CD8-positive, alpha-beta T cell (primary cell): ENCODE measurements at regions of chr19 and their contacts with region 1.

Region 1: DNA sequence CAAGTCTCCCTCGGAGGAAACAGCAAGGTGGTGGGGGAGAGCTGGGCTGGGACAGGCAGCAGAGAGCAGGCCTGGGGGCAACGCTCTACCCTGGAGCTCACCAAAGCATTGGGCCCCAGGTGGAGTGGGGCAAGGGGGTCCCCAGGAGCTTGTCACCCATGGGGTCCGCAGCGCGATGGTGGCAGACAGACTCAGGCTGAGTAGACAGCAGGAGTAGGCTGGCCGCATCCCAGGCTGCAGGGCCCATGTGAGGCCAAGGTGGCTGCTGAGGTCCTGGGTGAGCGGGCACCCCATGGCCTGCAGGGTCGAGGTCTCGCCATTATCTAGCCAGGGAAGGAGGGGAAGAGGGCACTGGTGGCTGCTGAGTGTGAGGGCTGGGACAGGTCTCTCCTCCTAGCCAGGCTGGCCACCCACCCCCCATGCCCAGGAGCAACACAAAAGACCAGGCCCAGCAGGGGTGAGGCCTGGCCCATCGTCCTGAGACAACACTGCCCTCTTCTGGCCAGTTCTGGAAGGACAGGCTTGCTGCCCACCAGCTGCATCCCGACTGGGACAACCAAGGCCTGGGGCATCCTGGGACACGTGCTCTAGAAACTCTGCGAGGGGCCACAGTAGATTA is 33.1 kb downstream of the CEBPG start:
- DNase-seq: peak; percentile 54 to 86 (median 74)
- ATAC-seq: peak; percentile 80
- H3K4me3 ChIP-seq: no peak overlapping the region
- H3K4me3 Mint-ChIP-seq: no peak overlapping the region
- H3K27ac ChIP-seq: no peak overlapping the region
- H3K27ac Mint-ChIP-seq: no peak overlapping the region
- H3K4me1 ChIP-seq: no peaks in the 10 kb centered on the region
- H3K4me1 Mint-ChIP-seq: no peaks in the 10 kb centered on the region
- H3K27me3 ChIP-seq: no peaks in the 10 kb centered on the region
- H3K27me3 Mint-ChIP-seq: no peaks in the 10 kb centered on the region
- CTCF ChIP-seq: peak; percentile 86

Region 2: DNA sequence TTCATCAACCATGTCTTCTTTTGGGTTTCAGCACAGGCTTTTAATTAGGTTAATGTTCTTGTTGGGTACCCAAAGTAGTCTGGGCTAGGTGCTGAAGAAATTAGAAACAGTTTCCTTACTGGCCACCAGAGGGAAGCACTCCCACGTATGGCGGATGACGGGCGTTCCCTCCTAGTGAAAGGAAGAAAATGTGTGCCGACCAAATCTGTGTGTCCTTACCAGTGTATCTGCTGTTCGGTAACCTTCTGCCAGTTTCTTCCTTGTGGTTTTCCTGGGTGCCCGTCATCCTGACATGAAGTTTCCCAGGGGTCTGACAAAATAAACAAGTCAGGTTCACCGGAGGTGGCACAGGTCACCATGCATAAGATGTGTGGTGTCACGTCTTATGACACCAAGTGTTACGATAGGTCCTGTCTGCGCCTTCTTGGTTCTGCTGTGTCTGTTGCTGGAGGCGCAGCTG is 280.7 kb before region 1 on chr19:
- CTCF ChIA-PET with region 1: interaction called, 7 read pairs
- POLR2A ChIA-PET with region 1: no interaction called
- intact Hi-C with region 1: loop called in 1 of 2 experiments (anchors 1 kb)
- DNase-seq: peak; percentile 9 to 79 (median 57)
- ATAC-seq: peak; percentile 97
- H3K4me3 ChIP-seq: no peak overlapping the region
- H3K4me3 Mint-ChIP-seq: no peak overlapping the region
- H3K27ac ChIP-seq: no peak overlapping the region
- H3K27ac Mint-ChIP-seq: no peak overlapping the region
- H3K4me1 ChIP-seq: no peaks in the 10 kb centered on the region
- H3K4me1 Mint-ChIP-seq: peaks cover 6% of the 10 kb centered on the region
- H3K27me3 ChIP-seq: no peaks in the 10 kb centered on the region
- H3K27me3 Mint-ChIP-seq: no peaks in the 10 kb centered on the region
- CTCF ChIP-seq: peak; percentile 71

Region 3: DNA sequence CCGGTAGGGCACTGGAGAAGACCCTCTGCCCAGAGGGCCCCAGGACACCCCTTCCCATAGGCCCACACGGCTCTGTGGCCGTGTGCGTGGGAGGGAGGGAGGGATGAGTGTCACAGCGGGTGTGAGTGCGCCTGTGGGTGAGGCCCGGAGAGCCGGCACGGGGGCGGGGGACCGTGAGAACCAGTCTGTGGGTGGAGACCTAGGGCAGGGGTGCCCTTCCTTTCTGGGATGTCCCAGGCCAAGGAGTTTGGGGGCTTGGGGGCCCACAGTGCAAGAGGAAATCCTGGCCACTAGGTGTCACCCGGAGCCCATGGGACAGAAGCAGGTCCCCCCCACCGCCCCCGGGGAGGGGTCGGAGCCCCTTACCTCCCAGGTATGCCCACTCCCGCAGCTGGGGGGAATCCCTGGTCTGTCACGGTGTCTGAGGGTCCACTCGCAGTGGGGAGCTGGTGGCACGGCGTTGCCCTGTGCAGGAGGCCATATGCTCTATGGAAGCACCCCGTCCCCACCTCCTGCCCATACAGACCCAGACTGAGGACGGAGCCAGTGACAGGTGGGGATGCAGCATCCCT is 165.0 kb before region 1 on chr19:
- CTCF ChIA-PET with region 1: interaction called, 100 read pairs
- POLR2A ChIA-PET with region 1: no interaction called
- intact Hi-C with region 1: loop called in 1 of 2 experiments (anchors 1 kb)
- DNase-seq: peak in 4 of 9 experiments; percentile 28 to 85 (median 52)
- ATAC-seq: peak; percentile 34
- H3K4me3 ChIP-seq: no peak overlapping the region
- H3K4me3 Mint-ChIP-seq: no peak overlapping the region
- H3K27ac ChIP-seq: peak overlapping the region in 1 of 2 experiments; percentile 87
- H3K27ac Mint-ChIP-seq: no peak overlapping the region
- H3K4me1 ChIP-seq: peaks cover 4% of the 10 kb centered on the region
- H3K4me1 Mint-ChIP-seq: no peaks in the 10 kb centered on the region
- H3K27me3 ChIP-seq: no peaks in the 10 kb centered on the region
- H3K27me3 Mint-ChIP-seq: peaks cover 6% of the 10 kb centered on the region
- CTCF ChIP-seq: no peak

Region 4: GRCh38 chr19:33332248-33332647 is 74.4 kb before region 1 on chr19:
- CTCF ChIA-PET with region 1: no interaction called
- POLR2A ChIA-PET with region 1: no interaction called
- intact Hi-C with region 1: loop called in 1 of 2 experiments (anchors 5 kb)
- DNase-seq: peak in 1 of 9 experiments; percentile 9
- ATAC-seq: no peak
- H3K4me3 ChIP-seq: no peak overlapping the region
- H3K4me3 Mint-ChIP-seq: no peak overlapping the region
- H3K27ac ChIP-seq: no peak overlapping the region
- H3K27ac Mint-ChIP-seq: no peak overlapping the region
- H3K4me1 ChIP-seq: no peaks in the 10 kb centered on the region
- H3K4me1 Mint-ChIP-seq: no peaks in the 10 kb centered on the region
- H3K27me3 ChIP-seq: no peaks in the 10 kb centered on the region
- H3K27me3 Mint-ChIP-seq: peaks cover 21% of the 10 kb centered on the region
- CTCF ChIP-seq: no peak